Activated T-helper 1 cell treated with anti-CD3 and anti-CD28 coated beads, Interleukin-12 subunit alpha, Interleukin-12 subunit beta, Interleukin-2, Interleukin-4 antibody, amounts not matched to agents 30 ng/mL and 10 ng/mL and 1 ng/mL, durations not matched to agents 14 hours and 24 hours and 36 hours (primary cell): ENCODE measurements at regions of chr10 and their contacts with region 1.

Region 1: GRCh38 chr10:23067939-23068775 is 27.2 kb upstream of the MSRB2 start:
- DNase-seq: peak; percentile 14
- H3K4me3 Mint-ChIP-seq: no peak overlapping the region
- H3K27ac Mint-ChIP-seq: no peak overlapping the region
- H3K4me1 Mint-ChIP-seq: no peaks in the 10 kb centered on the region
- H3K27me3 Mint-ChIP-seq: peaks cover 8% of the 10 kb centered on the region

Region 2: DNA sequence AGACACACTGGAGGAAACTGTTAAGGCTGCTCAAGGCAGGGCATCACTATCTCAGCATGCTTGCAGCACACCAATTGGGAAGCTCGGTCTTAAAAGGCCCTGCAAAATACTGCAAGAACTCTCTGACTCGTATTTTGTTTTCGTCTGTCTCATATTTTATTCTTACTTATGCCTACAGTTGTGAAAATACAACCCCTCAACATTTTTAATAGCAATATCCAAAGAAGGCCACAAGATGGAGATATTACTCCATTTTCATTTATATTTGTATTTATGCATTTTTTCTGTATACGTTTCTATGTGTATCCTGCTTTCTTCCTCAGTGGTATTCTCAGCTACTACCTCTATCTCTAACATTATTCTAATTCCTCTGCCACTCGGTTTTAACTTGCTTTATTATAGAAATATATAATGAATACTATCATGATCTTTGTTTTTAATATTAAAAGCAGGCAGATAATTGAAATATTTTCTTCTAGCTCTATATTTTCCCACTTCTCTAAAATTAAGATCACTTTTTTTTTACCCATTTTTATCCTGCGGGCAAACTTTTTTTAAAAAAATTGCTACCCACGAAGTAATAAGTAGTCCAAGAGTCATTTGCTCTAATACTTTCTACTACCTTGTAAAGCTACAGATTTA is 1074.7 kb before region 1 on chr10:
- intact Hi-C with region 1: loop called (anchors 1 kb)
- DNase-seq: no peak
- H3K4me3 Mint-ChIP-seq: no peak overlapping the region
- H3K27ac Mint-ChIP-seq: no peak overlapping the region
- H3K4me1 Mint-ChIP-seq: peaks cover 29% of the 10 kb centered on the region
- H3K27me3 Mint-ChIP-seq: no peaks in the 10 kb centered on the region

Region 3: GRCh38 chr10:22010973-22011408 is 1057.2 kb before region 1 on chr10:
- intact Hi-C with region 1: loop called (anchors 1 kb)
- DNase-seq: no peak
- H3K4me3 Mint-ChIP-seq: no peak overlapping the region
- H3K27ac Mint-ChIP-seq: no peak overlapping the region
- H3K4me1 Mint-ChIP-seq: no peaks in the 10 kb centered on the region
- H3K27me3 Mint-ChIP-seq: peaks cover 22% of the 10 kb centered on the region

Region 4: GRCh38 chr10:22550732-22551131 is 517.4 kb before region 1 on chr10:
- intact Hi-C with region 1: loop called (anchors 10 kb)
- DNase-seq: peak; percentile 13
- H3K4me3 Mint-ChIP-seq: no peak overlapping the region
- H3K27ac Mint-ChIP-seq: peak overlapping the region; percentile 40
- H3K4me1 Mint-ChIP-seq: peaks cover 23% of the 10 kb centered on the region
- H3K27me3 Mint-ChIP-seq: no peaks in the 10 kb centered on the region

Region 5: DNA sequence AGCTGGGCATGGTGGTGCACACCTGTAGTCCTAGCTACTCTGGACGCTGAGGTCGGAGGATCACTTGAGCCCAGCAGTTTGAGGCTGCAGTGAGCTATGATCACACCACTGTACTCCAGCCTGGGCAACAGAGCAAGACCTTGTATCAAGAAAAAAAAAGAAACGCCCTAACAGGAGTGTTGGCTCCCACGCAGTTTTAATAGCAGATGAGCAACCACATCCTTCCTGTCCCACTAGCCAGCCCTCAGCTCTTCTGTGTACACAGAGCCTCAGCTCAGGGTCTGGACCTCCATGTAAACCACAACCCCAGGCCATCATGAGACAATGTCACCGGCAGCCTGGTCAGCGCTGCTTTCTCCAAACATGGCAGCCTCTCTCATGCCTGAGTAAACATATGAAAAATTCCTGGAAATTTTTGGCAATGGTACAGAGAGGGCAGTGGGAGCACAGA is 462.0 kb before region 1 on chr10:
- intact Hi-C with region 1: no loop called
- DNase-seq: no peak
- H3K4me3 Mint-ChIP-seq: peak overlapping the region; percentile 3
- H3K27ac Mint-ChIP-seq: no peak overlapping the region
- H3K4me1 Mint-ChIP-seq: peaks cover 70% of the 10 kb centered on the region
- H3K27me3 Mint-ChIP-seq: no peaks in the 10 kb centered on the region